Naive thymus-derived CD4-positive, alpha-beta T cell (primary cell): ENCODE measurements at regions of chr14 and their contacts with region 1.

Region 1: GRCh38 chr14:64069634-64070359 is 217.0 kb downstream of the SYNE2 start:
- DNase-seq: no peak
- ATAC-seq: no peak
- H3K4me3 ChIP-seq: no peak overlapping the region
- H3K4me3 Mint-ChIP-seq: no peak overlapping the region
- H3K27ac ChIP-seq: no peak overlapping the region
- H3K27ac Mint-ChIP-seq: no peak overlapping the region
- H3K4me1 ChIP-seq: no peaks in the 10 kb centered on the region
- H3K4me1 Mint-ChIP-seq: peaks cover 0 to 1% (median 0%) of the 10 kb centered on the region in 7 donors
- H3K27me3 ChIP-seq: no peaks in the 10 kb centered on the region
- H3K27me3 Mint-ChIP-seq: no peaks in the 10 kb centered on the region

Region 2: GRCh38 chr14:64149921-64150320 is 80.1 kb after region 1 on chr14:
- CTCF ChIA-PET with region 1: no interaction called
- POLR2A ChIA-PET with region 1: no interaction called
- intact Hi-C with region 1: loop called in 1 of 2 experiments (anchors 5 kb)
- DNase-seq: no peak
- ATAC-seq: no peak
- H3K4me3 ChIP-seq: no peak overlapping the region
- H3K4me3 Mint-ChIP-seq: no peak overlapping the region
- H3K27ac ChIP-seq: no peak overlapping the region
- H3K27ac Mint-ChIP-seq: no peak overlapping the region
- H3K4me1 ChIP-seq: no peaks in the 10 kb centered on the region
- H3K4me1 Mint-ChIP-seq: no peaks in the 10 kb centered on the region
- H3K27me3 ChIP-seq: no peaks in the 10 kb centered on the region
- H3K27me3 Mint-ChIP-seq: no peaks in the 10 kb centered on the region